ENCODE measurements at regions of chr6 and their contacts with region 1.

Region 1: GRCh38 chr6:27825025-27825793 is 87.0 kb downstream of the OR2B2 start:
- DNase-seq: peak; percentile 35
- H3K4me3 ChIP-seq: peak overlapping the region; percentile 52 to 57 (median 53)
- H3K27ac ChIP-seq: peak overlapping the region; percentile 94
- H3K4me1 ChIP-seq: no peaks in the 10 kb centered on the region
- H3K27me3 ChIP-seq: no peaks in the 10 kb centered on the region
- CTCF ChIP-seq: no peak

Region 2: DNA sequence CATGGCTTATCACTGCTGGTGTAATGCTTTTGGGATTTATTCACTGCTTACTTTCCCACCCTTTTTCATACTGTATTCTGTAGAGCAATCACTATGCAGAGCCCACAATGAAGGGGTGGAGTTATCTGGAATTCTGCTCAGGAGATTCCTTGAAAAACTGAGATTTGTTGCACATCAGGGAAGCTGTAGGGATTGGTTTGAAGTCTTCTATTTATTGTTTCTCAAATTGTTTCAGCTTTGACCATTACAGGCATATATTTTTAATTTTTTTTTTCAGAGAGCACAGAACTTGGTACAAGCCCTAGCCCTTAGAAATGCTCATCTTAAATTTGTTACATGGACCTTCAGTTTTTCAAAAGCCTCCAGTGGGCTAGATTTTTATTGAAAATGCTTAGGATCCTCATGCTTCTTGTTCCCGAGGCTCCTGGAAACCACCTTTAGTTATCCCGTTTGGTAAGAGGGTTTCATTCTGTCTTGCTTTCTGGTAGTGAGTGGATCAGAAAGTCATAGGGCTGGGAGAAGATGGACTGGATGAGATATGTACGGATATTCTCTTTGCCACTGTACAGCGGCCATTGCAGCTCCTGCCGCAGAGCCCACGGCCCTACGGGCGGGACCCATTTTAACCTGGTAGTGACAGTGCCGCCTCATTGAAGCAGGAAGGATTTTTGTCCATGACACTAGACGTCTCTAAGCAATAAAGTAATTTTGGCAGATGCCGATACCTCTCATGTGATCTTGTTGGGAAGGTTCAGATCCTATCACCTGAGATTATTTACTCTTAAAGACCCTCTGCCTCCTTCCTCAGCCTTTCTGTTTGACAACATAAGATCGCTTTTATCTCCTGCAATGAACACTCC is 307.1 kb before region 1 on chr6:
- CTCF ChIA-PET with region 1: no interaction called
- dilution Hi-C with region 1: no loop called
- in situ Hi-C with region 1: no loop called
- intact Hi-C with region 1: no loop called
- DNase-seq: peak; percentile 8
- H3K4me3 ChIP-seq: peak overlapping the region; percentile 45 to 67 (median 55)
- H3K27ac ChIP-seq: peak overlapping the region; percentile 52
- H3K4me1 ChIP-seq: peaks cover 15% of the 10 kb centered on the region
- H3K27me3 ChIP-seq: peaks cover 5% of the 10 kb centered on the region
- CTCF ChIP-seq: no peak

Region 3: GRCh38 chr6:27871924-27872638 is 46.9 kb after region 1 on chr6:
- CTCF ChIA-PET with region 1: no interaction called
- dilution Hi-C with region 1: loop called (anchors 5 kb)
- in situ Hi-C with region 1: no loop called
- intact Hi-C with region 1: loop called (anchors 2 kb)
- DNase-seq: peak; percentile 94
- H3K4me3 ChIP-seq: peak overlapping the region; percentile 46 to 86 (median 63)
- H3K27ac ChIP-seq: peak overlapping the region; percentile 80
- H3K4me1 ChIP-seq: peaks cover 22% of the 10 kb centered on the region
- H3K27me3 ChIP-seq: no peaks in the 10 kb centered on the region
- CTCF ChIP-seq: peak; percentile 22 to 31

Measured in mammary epithelial cell (primary cell).